ENCODE measurements at regions of chr9 and their contacts with region 1.

Region 1: GRCh38 chr9:33076358-33077004 is at the start of gene SMU1:
- DNase-seq: peak; percentile 98
- H3K4me3 Mint-ChIP-seq: peak within 1 kb of the TSS; percentile 86
- H3K27ac Mint-ChIP-seq: peak within 1 kb of the TSS; percentile 99
- H3K4me1 Mint-ChIP-seq: peaks cover 14% of the 10 kb centered on the region
- H3K27me3 Mint-ChIP-seq: no peaks in the 10 kb centered on the region
- CTCF ChIP-seq: no peak
- total RNA-seq, gene SMU1: 17.2 and 19.3 TPM in 2 replicates

Region 2: DNA sequence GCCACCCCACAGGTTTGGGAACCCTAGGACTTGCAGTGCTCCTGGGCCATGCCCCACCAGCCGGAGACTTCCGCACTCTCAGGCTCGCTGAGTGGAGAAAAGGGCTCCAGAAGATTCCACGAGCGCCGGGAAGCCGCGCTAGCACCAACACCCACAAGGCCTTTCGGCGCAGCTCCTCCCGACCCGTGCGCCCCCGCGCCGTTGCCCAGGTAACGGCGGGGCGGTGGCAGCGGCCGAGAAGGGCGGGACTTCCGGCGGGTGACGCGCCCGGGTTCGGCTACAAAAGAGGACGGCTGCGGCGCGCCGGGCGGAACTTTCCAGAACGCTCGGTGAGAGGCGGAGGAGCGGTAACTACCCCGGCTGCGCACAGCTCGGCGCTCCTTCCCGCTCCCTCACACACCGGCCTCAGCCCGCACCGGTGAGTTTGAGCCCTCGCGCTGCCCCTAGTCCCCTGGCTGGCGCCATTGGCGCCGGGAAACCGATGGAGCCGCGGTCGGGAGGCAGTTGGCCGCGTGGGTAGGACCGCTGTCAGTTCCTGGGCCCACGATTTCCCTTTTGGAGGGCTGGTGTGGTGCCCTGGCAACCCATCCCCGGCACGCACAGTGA is 51.4 kb before region 1 on chr9 and contains the start of gene DNAJA1:
- CTCF ChIA-PET with region 1: no interaction called
- POLR2A ChIA-PET with region 1: interaction called, 36 read pairs
- intact Hi-C with region 1: no loop called
- DNase-seq: peak; percentile 93
- H3K4me3 Mint-ChIP-seq: peak within 1 kb of the TSS; percentile 93
- H3K27ac Mint-ChIP-seq: peak within 1 kb of the TSS; percentile 94
- H3K4me1 Mint-ChIP-seq: peaks cover 41% of the 10 kb centered on the region
- H3K27me3 Mint-ChIP-seq: no peaks in the 10 kb centered on the region
- CTCF ChIP-seq: no peak
- total RNA-seq, gene DNAJA1: 58.2 and 82.7 TPM in 2 replicates

Region 3: DNA sequence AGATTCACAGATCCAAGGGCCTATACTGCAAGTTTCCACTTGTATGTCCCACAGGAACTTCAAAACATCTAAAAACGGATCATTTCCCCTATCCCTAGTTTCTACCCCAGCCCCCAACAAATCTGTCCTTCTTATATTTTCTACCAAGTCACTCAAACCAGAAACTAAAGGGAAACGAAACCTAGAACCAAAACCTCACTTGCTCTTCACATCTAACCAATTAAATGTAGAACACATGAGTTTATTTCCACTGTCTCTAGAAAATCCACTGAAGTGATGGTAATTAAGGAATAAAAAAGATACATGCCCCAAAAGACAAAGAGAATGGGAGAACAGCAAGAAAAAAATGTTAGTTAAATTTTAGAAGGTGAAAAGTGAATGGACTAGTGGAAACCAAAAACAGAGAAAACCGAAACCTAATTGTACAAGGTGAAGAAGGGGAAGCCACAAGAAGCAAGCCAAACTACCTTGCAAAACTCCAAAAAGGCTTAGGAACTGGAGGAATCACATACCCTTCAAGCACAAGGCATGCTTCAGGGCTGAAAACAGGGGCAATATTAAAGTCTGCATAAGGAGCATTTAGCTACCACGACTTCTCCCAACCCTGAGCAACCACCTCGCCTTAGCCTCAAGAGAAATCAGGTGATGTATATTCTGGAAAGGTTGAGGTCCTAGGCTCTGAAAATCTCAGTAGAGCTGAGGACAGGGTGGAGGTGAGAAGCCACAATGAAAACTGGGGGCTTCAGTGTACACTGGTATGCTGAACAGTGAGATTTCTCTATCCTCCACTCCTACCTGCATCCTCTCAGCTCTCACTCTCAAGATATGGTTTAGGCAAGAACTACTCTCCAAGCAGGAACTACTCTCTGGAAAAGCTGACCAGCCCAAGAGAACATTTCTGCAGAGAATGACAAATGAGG is 11.1 kb before region 1 on chr9:
- CTCF ChIA-PET with region 1: interaction called, 3 read pairs
- POLR2A ChIA-PET with region 1: interaction called, 17 read pairs
- intact Hi-C with region 1: no loop called
- DNase-seq: no peak
- H3K4me3 Mint-ChIP-seq: no peak overlapping the region
- H3K27ac Mint-ChIP-seq: no peak overlapping the region
- H3K4me1 Mint-ChIP-seq: no peaks in the 10 kb centered on the region
- H3K27me3 Mint-ChIP-seq: no peaks in the 10 kb centered on the region
- CTCF ChIP-seq: no peak

Region 4: GRCh38 chr9:33159760-33160127 is 83.3 kb after region 1 on chr9:
- CTCF ChIA-PET with region 1: interaction called, 4 read pairs
- POLR2A ChIA-PET with region 1: interaction called, 90 read pairs
- intact Hi-C with region 1: no loop called
- DNase-seq: peak; percentile 77
- H3K4me3 Mint-ChIP-seq: peak overlapping the region; percentile 96
- H3K27ac Mint-ChIP-seq: peak overlapping the region; percentile 89
- H3K4me1 Mint-ChIP-seq: peaks cover 76% of the 10 kb centered on the region
- H3K27me3 Mint-ChIP-seq: no peaks in the 10 kb centered on the region
- CTCF ChIP-seq: no peak

Region 5: DNA sequence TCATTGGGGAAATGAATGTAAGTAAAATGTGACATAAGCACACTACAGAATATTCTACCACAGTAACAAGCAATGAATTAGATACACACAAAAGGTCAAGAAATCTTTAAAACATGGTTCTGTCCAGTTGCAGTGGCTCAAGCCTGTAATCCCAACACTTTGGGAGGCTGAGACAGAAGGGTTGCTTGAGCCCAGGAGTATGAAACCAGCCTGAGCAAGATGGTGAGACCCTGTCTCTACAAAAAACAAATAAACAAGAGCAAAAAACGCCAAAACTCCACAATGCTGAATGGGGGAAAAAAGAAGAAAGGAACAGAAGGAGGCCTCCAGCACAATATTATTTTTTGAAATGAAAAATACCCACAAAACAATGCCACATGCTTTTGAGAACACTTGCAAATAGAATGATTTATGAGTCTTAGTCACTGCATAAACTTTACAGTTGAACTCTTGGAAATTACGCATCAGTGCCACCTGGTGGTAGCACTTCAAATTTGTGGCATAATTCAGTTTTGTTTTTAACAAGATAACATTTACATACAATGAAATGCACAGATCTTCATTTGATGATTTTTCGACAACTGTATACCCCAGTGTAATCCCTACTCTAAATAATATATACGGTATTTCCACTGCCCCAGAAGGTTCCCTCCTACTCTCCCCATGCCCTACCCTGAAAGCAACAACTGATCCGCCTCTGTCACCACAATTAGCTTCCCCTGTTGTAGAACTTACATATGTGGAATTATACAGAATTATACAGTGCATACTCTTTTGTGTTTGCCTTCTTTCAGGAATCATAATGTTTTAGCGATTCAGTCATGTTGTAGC is 149.1 kb after region 1 on chr9:
- CTCF ChIA-PET with region 1: interaction called, 32 read pairs
- POLR2A ChIA-PET with region 1: interaction called, 29 read pairs
- intact Hi-C with region 1: loop called (anchors 1 kb)
- DNase-seq: peak; percentile 83
- H3K4me3 Mint-ChIP-seq: no peak overlapping the region
- H3K27ac Mint-ChIP-seq: no peak overlapping the region
- H3K4me1 Mint-ChIP-seq: peaks cover 33% of the 10 kb centered on the region
- H3K27me3 Mint-ChIP-seq: no peaks in the 10 kb centered on the region
- CTCF ChIP-seq: peak; percentile 52

Region 6: GRCh38 chr9:33264473-33265177 is 188.1 kb after region 1 on chr9 and contains the starts of genes BAG1 and CHMP5:
- CTCF ChIA-PET with region 1: interaction called, 3 read pairs
- POLR2A ChIA-PET with region 1: interaction called, 13 read pairs
- intact Hi-C with region 1: loop called (anchors 1 kb)
- DNase-seq: peak; percentile 99
- H3K4me3 Mint-ChIP-seq: peak within 1 kb of the TSS; percentile 99
- H3K27ac Mint-ChIP-seq: peak within 1 kb of the TSS; percentile 95
- H3K4me1 Mint-ChIP-seq: peaks cover 33% of the 10 kb centered on the region
- H3K27me3 Mint-ChIP-seq: no peaks in the 10 kb centered on the region
- CTCF ChIP-seq: no peak
- total RNA-seq, gene BAG1: 75.7 and 91.8 TPM in 2 replicates
- total RNA-seq, gene CHMP5: 67.6 and 85.1 TPM in 2 replicates